Activated naive CD4-positive, alpha-beta T cell treated with anti-CD3 and anti-CD28 coated beads, Interleukin-2, amount 10 ng/mL, durations not matched to agents 7 days and 5 days (primary cell): ENCODE measurements at regions of chr9 and their contacts with region 1.

Region 1: GRCh38 chr9:132169672-132170392 is 8.0 kb downstream of the NTNG2 start:
- DNase-seq: peak; percentile 66
- H3K4me3 Mint-ChIP-seq: no peak overlapping the region
- H3K27ac Mint-ChIP-seq: no peak overlapping the region
- H3K4me1 Mint-ChIP-seq: no peaks in the 10 kb centered on the region
- H3K27me3 Mint-ChIP-seq: peaks cover 83% of the 10 kb centered on the region

Region 2: DNA sequence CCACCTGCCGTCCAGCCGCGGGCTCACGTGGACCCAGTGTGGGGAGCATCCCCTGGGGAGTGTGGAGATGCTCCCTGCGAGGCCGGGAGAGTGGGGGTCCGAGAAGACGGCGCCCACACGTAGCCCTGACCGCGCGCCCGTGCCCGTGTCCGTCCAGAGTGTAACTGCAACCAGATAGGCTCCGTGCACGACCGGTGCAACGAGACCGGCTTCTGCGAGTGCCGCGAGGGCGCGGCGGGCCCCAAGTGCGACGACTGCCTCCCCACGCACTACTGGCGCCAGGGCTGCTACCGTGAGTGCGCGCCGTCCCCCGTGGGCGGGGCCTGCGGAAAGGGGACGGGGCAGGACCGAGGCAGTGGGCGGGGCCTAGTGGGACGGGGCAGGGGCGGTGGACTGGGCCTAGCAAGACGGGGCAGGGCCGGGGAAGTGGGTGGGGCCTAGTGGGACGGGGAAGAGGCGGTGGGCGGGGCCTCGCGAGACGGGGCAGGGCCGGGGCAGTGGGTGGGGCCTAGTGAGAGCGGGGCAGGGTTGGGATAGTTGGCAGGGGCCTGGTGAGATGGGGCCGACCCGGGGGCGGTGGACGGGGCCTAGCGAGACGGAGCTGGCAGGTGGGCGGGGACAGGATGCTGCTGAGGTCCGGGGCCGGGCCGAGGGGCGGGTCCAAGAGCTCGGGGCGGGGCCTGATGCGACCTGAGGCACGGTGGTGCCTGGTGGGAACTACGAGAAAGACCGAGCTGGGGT is 71.1 kb after region 1 on chr9:
- CTCF ChIA-PET with region 1: interaction called, 146 read pairs
- DNase-seq: peak; percentile 100
- H3K4me3 Mint-ChIP-seq: peak overlapping the region; percentile 92
- H3K27ac Mint-ChIP-seq: peak overlapping the region; percentile 84
- H3K4me1 Mint-ChIP-seq: peaks cover 30% of the 10 kb centered on the region
- H3K27me3 Mint-ChIP-seq: peaks cover 92% of the 10 kb centered on the region